ENCODE measurements at regions of chr9 and their contacts with region 1.

Region 1: DNA sequence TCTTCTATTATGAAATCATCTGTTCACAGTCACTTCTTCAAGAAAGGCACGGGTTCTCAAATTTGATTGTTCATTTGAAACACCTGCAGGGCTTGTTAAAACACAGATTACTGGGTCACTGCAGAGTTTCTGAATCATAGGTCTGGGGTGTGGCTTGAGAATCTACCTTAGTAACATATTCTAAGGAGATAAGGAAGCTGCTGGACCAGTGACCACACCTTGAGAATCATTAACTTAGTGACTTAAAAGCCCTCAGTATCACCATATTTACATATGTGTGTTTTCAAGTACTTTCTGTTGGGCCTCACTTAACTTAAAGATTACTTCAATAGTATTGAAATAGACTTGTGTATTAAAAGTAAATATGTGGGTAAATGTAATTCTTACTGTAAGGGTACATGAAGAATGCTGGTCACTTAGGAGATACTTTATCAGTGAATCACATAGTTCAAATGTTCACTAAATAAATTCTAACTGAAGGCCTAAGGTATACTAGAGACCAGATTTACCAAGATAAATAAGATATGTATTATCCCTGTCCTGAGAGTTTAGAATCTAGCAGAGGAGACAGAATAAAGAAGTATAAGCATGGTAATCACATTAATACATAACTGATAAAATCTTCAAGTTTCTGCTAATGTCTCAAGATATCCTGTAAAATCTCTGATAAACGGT is 1342.1 kb upstream of the C9orf72 start:
- DNase-seq: no peak
- ATAC-seq: no peak
- H3K4me3 ChIP-seq: no peak overlapping the region
- H3K27ac ChIP-seq: no peak overlapping the region
- H3K4me1 ChIP-seq: no peaks in the 10 kb centered on the region
- H3K27me3 ChIP-seq: no peaks in the 10 kb centered on the region
- CTCF ChIP-seq: no peak
- POLR2A ChIP-seq: no peak

Region 2: DNA sequence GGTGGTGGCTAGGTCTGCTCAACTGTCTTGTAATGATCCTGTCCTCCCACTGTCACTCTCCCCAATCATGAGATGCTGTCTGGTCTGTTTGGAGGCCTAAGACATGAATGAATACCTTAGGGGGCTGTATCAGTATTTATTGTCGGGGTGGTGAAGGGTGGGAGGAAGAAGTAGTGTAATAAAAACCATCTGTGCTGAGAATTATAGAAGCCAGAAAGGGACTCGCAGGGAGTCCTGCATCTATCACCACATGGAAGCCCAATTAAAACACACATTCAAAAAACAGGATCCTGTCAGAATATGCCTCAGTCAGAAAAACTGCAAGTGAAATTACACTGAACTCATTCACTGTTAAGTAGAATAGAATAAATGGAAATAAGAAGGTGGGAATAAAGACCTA is 207.8 kb before region 1 on chr9:
- in situ Hi-C with region 1: no loop called
- intact Hi-C with region 1: no loop called
- DNase-seq: no peak
- ATAC-seq: no peak
- H3K4me3 ChIP-seq: no peak overlapping the region
- H3K27ac ChIP-seq: no peak overlapping the region
- H3K4me1 ChIP-seq: no peaks in the 10 kb centered on the region
- H3K27me3 ChIP-seq: no peaks in the 10 kb centered on the region
- CTCF ChIP-seq: no peak
- POLR2A ChIP-seq: no peak

Region 3: DNA sequence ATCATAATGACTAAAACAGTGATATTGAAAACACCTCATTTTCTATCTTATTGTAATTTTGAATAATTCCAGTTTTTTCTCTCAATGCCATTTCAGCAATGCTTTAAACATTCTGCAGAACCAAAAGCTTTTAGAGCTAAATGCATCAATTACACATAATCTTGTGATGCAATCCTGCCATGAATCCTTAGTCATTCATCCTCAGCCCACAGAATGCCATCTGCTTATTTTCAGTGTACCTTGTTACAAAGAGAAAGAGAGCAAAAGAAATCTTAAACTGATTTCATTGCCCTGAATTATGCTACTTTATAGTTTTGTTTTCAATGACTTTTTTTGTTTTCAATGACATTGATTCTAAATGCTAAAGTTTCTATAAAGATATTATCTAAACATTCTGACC is 107.4 kb before region 1 on chr9:
- in situ Hi-C with region 1: loop called in 1 of 4 experiments (anchors 25 kb)
- intact Hi-C with region 1: no loop called
- DNase-seq: no peak
- ATAC-seq: no peak
- H3K4me3 ChIP-seq: no peak overlapping the region
- H3K27ac ChIP-seq: no peak overlapping the region
- H3K4me1 ChIP-seq: no peaks in the 10 kb centered on the region
- H3K27me3 ChIP-seq: no peaks in the 10 kb centered on the region
- CTCF ChIP-seq: no peak
- POLR2A ChIP-seq: no peak

Region 4: GRCh38 chr9:28839778-28840430 is 75.5 kb before region 1 on chr9:
- in situ Hi-C with region 1: no loop called
- intact Hi-C with region 1: no loop called
- DNase-seq: no peak
- ATAC-seq: no peak
- H3K4me3 ChIP-seq: no peak overlapping the region
- H3K27ac ChIP-seq: no peak overlapping the region
- H3K4me1 ChIP-seq: no peaks in the 10 kb centered on the region
- H3K27me3 ChIP-seq: no peaks in the 10 kb centered on the region
- CTCF ChIP-seq: no peak
- POLR2A ChIP-seq: no peak